AG04450 (cell line): ENCODE measurements at regions of chr6 and their contacts with region 1.

Region 1: DNA sequence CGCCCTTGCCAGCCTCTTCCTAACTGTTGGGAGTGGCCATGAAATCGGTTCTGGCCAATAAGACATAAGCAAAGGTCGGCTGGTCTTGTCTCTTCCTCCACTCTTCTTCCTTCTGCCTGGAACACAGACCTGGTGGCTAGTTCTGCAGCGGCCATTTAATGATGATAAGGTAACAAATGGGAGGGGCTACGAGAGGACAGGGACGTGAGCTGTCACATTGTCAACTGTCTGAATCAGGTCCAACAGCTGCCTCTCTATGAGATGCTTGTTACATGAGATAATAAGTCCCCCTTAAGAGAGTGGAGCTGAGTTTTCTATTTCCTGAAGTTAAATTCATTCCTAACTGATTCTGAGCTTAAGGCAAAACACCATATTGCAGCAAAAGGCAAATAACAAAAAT is 12.5 kb upstream of the TMEM242 start:
- DNase-seq: no peak
- H3K4me3 ChIP-seq: no peak overlapping the region
- H3K27ac ChIP-seq: no peak overlapping the region
- H3K27me3 ChIP-seq: peaks cover 17% of the 10 kb centered on the region
- CTCF ChIP-seq: no peak

Region 2: DNA sequence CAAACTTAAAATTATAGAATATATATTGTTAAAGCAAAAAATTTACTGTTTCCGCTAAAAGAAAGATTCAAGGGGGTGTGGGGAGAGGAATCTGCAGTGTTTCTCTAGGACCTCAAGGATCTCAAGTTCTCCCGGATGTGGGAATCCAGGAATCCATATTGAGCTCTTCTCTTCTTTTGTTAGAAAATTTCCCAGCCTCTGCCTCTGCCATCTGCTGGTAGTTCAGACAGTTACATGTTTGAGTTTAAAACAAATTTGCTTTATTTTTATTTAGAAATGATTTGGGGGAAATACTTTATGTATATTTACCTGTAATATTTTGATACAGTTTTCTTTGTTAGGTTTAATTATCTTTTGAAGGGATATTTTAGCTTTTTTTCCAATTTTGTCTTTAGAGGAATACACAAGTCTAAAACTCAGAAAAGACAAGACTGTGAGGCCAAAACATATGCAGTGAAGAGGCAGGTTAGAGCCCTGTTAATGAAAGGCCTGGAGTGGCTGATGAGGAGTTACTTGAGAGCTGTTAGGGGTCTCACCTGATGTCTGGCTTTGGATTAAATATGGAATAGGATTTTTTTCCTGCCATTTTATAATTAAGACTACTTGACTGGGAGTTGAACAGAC is 289.9 kb before region 1 on chr6:
- CTCF ChIA-PET with region 1: no interaction called
- POLR2A ChIA-PET with region 1: no interaction called
- DNase-seq: no peak
- H3K4me3 ChIP-seq: no peak overlapping the region
- H3K27ac ChIP-seq: no peak overlapping the region
- H3K27me3 ChIP-seq: no peaks in the 10 kb centered on the region
- CTCF ChIP-seq: peak; percentile 75

Region 3: GRCh38 chr6:157184202-157185020 is 151.4 kb before region 1 on chr6:
- CTCF ChIA-PET with region 1: no interaction called
- POLR2A ChIA-PET with region 1: no interaction called
- DNase-seq: peak; percentile 15
- H3K4me3 ChIP-seq: no peak overlapping the region
- H3K27ac ChIP-seq: no peak overlapping the region
- H3K27me3 ChIP-seq: no peaks in the 10 kb centered on the region
- CTCF ChIP-seq: peak; percentile 94

Region 4: DNA sequence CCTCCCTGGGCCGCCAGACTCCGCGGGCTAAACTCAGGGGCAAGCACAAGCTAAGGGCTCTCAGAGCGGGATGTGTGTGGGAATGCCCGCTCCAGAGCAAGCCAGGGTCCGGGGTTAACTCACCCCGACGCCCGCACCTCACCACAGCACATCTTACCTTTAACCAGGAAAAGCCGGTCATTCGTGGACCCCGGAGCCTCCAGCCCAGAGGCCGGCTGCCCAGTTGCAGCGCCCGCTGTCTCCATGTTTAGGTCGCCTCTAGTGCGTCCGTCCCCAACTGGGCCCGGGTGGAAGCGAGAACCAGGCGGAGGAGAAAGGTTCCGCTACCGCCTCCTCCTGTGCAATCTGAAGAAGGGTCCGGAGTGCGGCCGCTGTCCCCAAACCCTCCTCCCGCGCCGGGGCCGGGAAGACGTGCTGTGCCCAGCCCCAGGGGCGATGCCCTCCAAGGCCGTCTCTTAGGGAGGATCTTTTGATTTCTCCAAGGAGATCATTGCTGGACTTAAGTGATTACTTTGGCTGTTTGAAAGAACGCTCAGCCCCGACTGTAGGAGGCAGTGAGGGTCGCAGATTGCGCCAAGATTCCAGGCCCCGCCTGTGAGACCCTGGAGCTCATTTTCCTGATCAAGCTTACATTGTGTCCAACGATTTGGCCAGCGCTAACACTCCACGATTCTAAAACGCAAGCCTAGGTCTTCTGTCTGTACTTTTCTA is 12.4 kb before region 1 on chr6 and contains the start of gene TMEM242:
- CTCF ChIA-PET with region 1: interaction called, 13 read pairs
- POLR2A ChIA-PET with region 1: interaction called, 3 read pairs
- DNase-seq: peak; percentile 82
- H3K4me3 ChIP-seq: peak within 1 kb of the TSS; percentile 74
- H3K27ac ChIP-seq: peak within 1 kb of the TSS; percentile 85
- H3K27me3 ChIP-seq: no peaks in the 10 kb centered on the region
- CTCF ChIP-seq: peak; percentile 50
- polyA plus RNA-seq, gene TMEM242: 6.8 and 8.6 TPM in 2 replicates